ENCODE measurements at regions of chr4 and their contacts with region 1.

Region 1: DNA sequence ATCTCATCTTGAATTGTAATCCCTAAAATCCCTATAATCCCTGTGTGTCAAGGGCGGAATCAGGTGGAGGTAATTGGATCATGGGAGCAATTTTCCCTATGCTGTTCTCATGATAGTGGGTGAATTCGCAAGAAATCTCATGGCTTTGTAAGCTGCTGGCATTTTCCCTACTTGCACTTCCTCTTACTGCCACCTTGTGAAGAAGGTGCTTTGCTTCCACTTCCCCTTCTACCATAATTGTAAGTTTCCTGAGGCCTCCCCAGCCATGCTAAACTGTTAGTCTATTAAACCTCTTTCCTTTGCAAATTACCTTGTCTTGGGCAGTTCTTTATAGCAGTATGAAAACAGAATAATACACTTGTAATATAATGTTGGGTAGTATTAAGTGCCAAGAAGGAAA is 1087.4 kb upstream of the SLIT2 start:
- DNase-seq: no peak
- ATAC-seq: no peak
- H3K4me3 ChIP-seq: no peak overlapping the region
- H3K27ac ChIP-seq: no peak overlapping the region
- H3K4me1 ChIP-seq: no peaks in the 10 kb centered on the region
- H3K27me3 ChIP-seq: no peaks in the 10 kb centered on the region
- CTCF ChIP-seq: no peak
- POLR2A ChIP-seq: no peak
- RAD21 ChIP-seq: no peak

Region 2: GRCh38 chr4:18463987-18464559 is 700.3 kb before region 1 on chr4:
- CTCF ChIA-PET with region 1: no interaction called
- POLR2A ChIA-PET with region 1: no interaction called
- dilution Hi-C with region 1: no loop called
- in situ Hi-C with region 1: no loop called
- intact Hi-C with region 1: loop called (anchors 5 kb)
- DNase-seq: no peak
- ATAC-seq: no peak
- H3K4me3 ChIP-seq: no peak overlapping the region
- H3K27ac ChIP-seq: no peak overlapping the region
- H3K4me1 ChIP-seq: no peaks in the 10 kb centered on the region
- H3K27me3 ChIP-seq: no peaks in the 10 kb centered on the region
- CTCF ChIP-seq: no peak
- POLR2A ChIP-seq: no peak
- RAD21 ChIP-seq: no peak

Region 3: GRCh38 chr4:19151684-19152083 is 12.7 kb before region 1 on chr4:
- CTCF ChIA-PET with region 1: interaction called, 7 read pairs
- POLR2A ChIA-PET with region 1: interaction called, 12 read pairs
- dilution Hi-C with region 1: no loop called
- in situ Hi-C with region 1: no loop called
- intact Hi-C with region 1: no loop called
- DNase-seq: no peak
- ATAC-seq: no peak
- H3K4me3 ChIP-seq: no peak overlapping the region
- H3K27ac ChIP-seq: no peak overlapping the region
- H3K4me1 ChIP-seq: no peaks in the 10 kb centered on the region
- H3K27me3 ChIP-seq: no peaks in the 10 kb centered on the region
- CTCF ChIP-seq: no peak
- POLR2A ChIP-seq: no peak
- RAD21 ChIP-seq: no peak

Region 4: DNA sequence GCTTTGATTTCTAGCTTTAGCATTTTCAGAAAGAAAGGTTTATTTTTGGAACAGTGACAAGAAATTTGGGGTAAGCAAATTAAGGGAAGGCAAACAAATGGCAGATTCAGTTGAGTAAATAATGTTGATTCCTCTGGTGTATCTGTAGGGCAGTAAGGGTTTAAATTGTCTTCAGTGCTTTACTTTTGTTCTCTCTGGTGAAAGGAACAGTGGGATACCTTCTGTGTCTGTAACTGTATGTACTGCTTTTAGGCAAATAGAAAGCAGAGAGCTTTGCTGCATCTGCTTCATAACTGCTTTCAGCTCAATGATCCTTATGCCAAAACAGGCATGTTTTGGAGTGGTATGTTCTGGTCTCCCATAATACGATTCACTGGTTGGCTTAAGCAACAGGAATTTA is 155.3 kb after region 1 on chr4:
- CTCF ChIA-PET with region 1: no interaction called
- POLR2A ChIA-PET with region 1: no interaction called
- dilution Hi-C with region 1: no loop called
- in situ Hi-C with region 1: no loop called
- intact Hi-C with region 1: no loop called
- DNase-seq: no peak
- ATAC-seq: no peak
- H3K4me3 ChIP-seq: no peak overlapping the region
- H3K27ac ChIP-seq: no peak overlapping the region
- H3K4me1 ChIP-seq: no peaks in the 10 kb centered on the region
- H3K27me3 ChIP-seq: no peaks in the 10 kb centered on the region
- CTCF ChIP-seq: no peak
- POLR2A ChIP-seq: no peak
- RAD21 ChIP-seq: no peak

Measured in IMR-90 (cell line).